OCI-LY7 (cell line): ENCODE measurements at regions of chr6 and their contacts with region 1.

Region 1: GRCh38 chr6:160534050-160534696 is 129.9 kb downstream of the LPA start:
- DNase-seq: peak; percentile 37
- H3K4me3 ChIP-seq: no peak overlapping the region
- H3K27ac ChIP-seq: no peak overlapping the region
- H3K4me1 ChIP-seq: no peaks in the 10 kb centered on the region
- CTCF ChIP-seq: peak; percentile 89

Region 2: GRCh38 chr6:160137989-160138835 is 396.0 kb before region 1 on chr6:
- CTCF ChIA-PET with region 1: no interaction called
- POLR2A ChIA-PET with region 1: no interaction called
- intact Hi-C with region 1: loop called (anchors 5 kb)
- DNase-seq: peak; percentile 62
- H3K4me3 ChIP-seq: no peak overlapping the region
- H3K27ac ChIP-seq: no peak overlapping the region
- H3K4me1 ChIP-seq: no peaks in the 10 kb centered on the region
- CTCF ChIP-seq: peak; percentile 89

Region 3: GRCh38 chr6:160455541-160456213 is 78.5 kb before region 1 on chr6:
- CTCF ChIA-PET with region 1: no interaction called
- POLR2A ChIA-PET with region 1: no interaction called
- intact Hi-C with region 1: loop called (anchors 1 kb)
- DNase-seq: peak; percentile 56
- H3K4me3 ChIP-seq: no peak overlapping the region
- H3K27ac ChIP-seq: no peak overlapping the region
- H3K4me1 ChIP-seq: no peaks in the 10 kb centered on the region
- CTCF ChIP-seq: peak; percentile 95

Region 4: GRCh38 chr6:160544802-160545201 is 10.6 kb after region 1 on chr6:
- CTCF ChIA-PET with region 1: no interaction called
- POLR2A ChIA-PET with region 1: no interaction called
- intact Hi-C with region 1: no loop called
- DNase-seq: no peak
- H3K4me3 ChIP-seq: no peak overlapping the region
- H3K27ac ChIP-seq: no peak overlapping the region
- H3K4me1 ChIP-seq: no peaks in the 10 kb centered on the region
- CTCF ChIP-seq: no peak

Region 5: GRCh38 chr6:161029195-161029809 is 495.1 kb after region 1 on chr6:
- CTCF ChIA-PET with region 1: no interaction called
- POLR2A ChIA-PET with region 1: no interaction called
- intact Hi-C with region 1: no loop called
- DNase-seq: no peak
- H3K4me3 ChIP-seq: no peak overlapping the region
- H3K27ac ChIP-seq: no peak overlapping the region
- H3K4me1 ChIP-seq: peaks cover 10% of the 10 kb centered on the region
- CTCF ChIP-seq: no peak